ENCODE measurements at regions of chr4 and their contacts with region 1.

Region 1: DNA sequence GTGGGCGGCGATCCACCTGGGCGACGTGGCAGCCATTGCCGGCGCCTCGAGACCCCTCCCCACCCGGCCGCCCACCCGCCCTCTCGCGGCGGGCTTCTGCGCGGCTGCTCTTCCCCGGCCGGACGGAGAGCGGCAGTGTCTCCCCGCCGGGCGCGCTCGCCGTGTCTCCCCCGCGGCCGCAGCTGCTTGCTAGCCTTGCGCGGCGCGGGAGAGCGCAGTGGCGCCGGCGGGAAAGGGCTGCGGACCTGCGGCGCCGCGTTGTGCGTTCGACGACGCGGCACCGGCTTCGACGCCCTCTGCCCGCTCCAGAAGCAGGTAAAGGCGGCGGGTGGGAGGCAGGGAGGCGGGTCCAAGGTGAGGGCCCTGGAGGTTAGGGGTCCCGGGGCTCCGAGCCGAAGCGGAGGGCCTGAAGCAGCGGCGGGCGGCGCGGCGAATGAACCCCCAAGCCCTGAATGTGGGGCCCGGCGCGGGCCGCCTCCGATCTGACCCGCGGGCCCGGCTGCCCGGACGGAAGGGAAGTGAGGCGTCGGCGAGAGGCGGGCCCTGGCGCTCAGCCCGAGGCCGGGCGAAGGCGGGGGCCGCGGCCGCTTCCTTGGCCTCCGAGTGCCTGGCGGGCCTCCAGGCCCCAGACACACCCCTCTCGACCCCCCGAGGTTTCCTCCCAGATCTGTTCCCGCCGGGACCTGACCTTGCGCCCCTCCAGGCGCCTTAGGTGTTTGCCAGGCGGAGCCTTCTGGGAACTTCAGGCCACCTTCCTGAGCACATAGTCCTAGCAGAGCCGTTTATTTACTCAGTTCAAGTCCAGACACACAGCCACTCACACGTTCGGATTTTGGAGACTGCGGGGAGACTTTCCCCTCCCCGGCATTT is at the start of gene N4BP2:
- DNase-seq: peak; percentile 67
- H3K4me3 Mint-ChIP-seq: peak within 1 kb of the TSS; percentile 96
- H3K27ac Mint-ChIP-seq: peak within 1 kb of the TSS; percentile 100
- H3K4me1 Mint-ChIP-seq: peaks cover 40% of the 10 kb centered on the region
- H3K27me3 Mint-ChIP-seq: no peaks in the 10 kb centered on the region
- total RNA-seq, gene N4BP2: 28.7 and 29.0 TPM in 2 replicates

Region 2: DNA sequence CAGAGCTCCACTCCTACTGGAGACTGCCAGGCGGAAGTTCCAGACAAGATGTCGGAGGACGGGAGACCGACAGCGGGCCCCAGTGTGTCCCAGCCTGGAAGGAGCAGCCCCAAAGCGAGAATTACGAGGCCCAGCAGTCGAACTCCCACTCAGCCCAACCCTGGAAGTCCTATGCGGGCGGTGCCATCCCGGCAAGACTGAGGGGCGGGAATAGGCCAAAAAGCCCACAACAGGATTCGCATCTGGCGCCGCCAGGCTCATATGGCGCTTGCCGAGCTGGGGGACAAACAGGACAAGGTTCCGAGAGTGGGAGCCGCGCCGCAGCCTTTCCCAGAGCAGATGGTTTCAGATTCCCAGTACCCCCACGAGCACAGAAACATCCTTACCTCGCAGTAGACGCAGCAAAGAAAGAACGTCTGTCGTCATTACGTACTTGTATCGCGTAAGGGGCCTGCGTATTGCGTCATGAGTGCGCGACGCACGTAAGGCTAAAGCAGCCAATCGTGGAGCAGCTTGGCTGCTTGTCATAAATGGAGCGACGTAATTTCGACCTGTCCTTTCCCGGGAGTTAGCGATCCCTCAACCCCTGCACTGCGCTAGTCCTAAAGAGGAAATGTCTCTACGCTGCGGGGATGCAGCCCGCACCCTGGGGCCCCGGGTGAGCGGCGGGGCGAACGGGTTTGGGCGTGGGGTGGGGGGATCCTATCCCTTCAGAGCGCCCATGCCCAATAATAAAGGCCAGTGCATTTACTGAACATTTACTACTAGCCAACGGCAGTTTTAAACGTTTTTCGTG is 598.2 kb before region 1 on chr4 and contains the starts of genes LIAS and RPL9:
- intact Hi-C with region 1: loop called (anchors 2 kb)
- DNase-seq: peak; percentile 93
- H3K4me3 Mint-ChIP-seq: peak within 1 kb of the TSS; percentile 99
- H3K27ac Mint-ChIP-seq: peak within 1 kb of the TSS; percentile 99
- H3K4me1 Mint-ChIP-seq: peaks cover 49% of the 10 kb centered on the region
- H3K27me3 Mint-ChIP-seq: no peaks in the 10 kb centered on the region
- total RNA-seq, gene LIAS: 28.6 and 29.7 TPM in 2 replicates
- total RNA-seq, gene RPL9: 1,540 and 1,586 TPM in 2 replicates

Region 3: GRCh38 chr4:39933671-39934590 is 123.0 kb before region 1 on chr4:
- intact Hi-C with region 1: loop called (anchors 5 kb)
- DNase-seq: no peak
- H3K4me3 Mint-ChIP-seq: no peak overlapping the region
- H3K27ac Mint-ChIP-seq: no peak overlapping the region
- H3K4me1 Mint-ChIP-seq: peaks cover 60% of the 10 kb centered on the region
- H3K27me3 Mint-ChIP-seq: no peaks in the 10 kb centered on the region

Region 4: GRCh38 chr4:40121515-40121914 is 64.6 kb after region 1 on chr4:
- intact Hi-C with region 1: loop called (anchors 5 kb)
- DNase-seq: no peak
- H3K4me3 Mint-ChIP-seq: no peak overlapping the region
- H3K27ac Mint-ChIP-seq: peak overlapping the region; percentile 18
- H3K4me1 Mint-ChIP-seq: peaks cover 42% of the 10 kb centered on the region
- H3K27me3 Mint-ChIP-seq: no peaks in the 10 kb centered on the region

Region 5: DNA sequence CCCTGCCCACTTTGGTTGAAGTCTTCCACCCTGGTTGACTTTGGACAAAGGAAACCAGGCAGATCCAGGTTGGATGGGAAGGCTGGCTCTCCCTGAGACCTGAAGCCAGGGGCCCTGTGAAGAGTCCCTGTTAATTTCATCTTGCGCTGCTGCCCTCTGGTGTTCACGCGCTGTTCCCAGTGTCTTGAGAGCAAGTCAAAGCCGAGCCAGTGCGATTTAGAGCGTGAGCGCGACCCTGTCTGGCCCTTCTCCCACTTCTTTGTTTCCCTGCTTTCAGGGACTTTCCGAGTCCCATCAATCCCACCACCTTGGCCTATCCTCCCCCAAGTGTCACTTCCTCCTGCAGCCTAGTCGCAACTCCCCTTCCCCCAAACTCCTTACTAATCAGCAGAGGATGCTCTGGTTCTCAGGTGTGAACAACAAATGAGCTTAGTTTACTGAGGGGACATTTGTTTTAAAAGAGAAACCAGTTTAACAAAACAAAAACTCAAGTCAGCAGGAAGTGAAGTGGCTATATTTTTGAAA is 252.4 kb after region 1 on chr4:
- intact Hi-C with region 1: loop called (anchors 2 kb)
- DNase-seq: peak; percentile 81
- H3K4me3 Mint-ChIP-seq: peak overlapping the region; percentile 67
- H3K27ac Mint-ChIP-seq: peak overlapping the region; percentile 94
- H3K4me1 Mint-ChIP-seq: peaks cover 88% of the 10 kb centered on the region
- H3K27me3 Mint-ChIP-seq: no peaks in the 10 kb centered on the region

Region 6: DNA sequence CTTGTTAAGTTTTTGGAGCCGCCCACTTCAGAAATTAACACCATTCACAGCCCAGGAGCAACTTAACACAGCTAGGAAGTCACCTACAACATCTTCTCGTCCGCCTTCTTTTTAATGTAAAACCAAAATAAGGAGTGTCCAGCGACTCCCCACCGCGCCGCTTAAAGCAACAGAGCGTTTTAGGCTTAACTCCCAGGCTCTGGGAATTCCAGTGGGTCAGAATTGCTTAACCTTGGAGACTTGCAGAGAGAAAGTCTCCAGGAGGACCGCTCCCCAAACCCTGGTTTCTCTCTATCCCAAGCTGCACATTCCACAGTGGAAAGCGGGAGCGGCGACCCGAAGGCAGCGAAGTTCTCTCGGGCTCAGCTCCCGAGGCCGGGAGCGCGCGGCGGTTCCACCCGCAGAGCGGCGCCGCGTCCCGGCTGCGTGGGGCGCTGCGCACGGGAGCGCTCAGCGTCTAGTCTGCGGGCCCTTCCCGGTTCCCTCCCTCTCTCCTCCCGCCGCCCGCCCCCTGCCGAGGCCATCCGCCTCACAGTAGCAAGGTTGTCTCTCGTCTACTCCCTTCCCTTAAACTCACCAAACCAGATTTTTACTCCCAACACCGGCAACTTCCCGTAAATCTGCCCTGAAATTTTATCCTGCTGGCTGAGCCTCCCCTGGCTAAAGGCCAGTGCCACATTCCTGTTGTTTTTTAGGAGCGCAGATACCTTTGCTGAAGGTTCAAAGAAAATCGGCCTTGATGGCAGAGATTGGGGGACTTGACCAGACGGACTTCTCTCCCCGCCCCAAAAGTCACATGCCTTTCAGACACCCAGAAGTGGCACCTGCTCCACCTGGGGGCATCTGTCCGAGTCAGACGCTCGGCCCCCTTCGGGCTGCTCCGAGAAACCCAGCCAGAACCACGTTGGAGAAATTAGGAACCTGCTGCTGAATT is 572.7 kb after region 1 on chr4 and contains the start of gene RBM47:
- intact Hi-C with region 1: loop called (anchors 5 kb)
- DNase-seq: peak; percentile 12
- H3K4me3 Mint-ChIP-seq: peak within 1 kb of the TSS; percentile 92
- H3K27ac Mint-ChIP-seq: peak within 1 kb of the TSS; percentile 84
- H3K4me1 Mint-ChIP-seq: peaks cover 41% of the 10 kb centered on the region
- H3K27me3 Mint-ChIP-seq: peaks cover 2% of the 10 kb centered on the region
- total RNA-seq, gene RBM47: 20.3 and 21.4 TPM in 2 replicates

Region 7: DNA sequence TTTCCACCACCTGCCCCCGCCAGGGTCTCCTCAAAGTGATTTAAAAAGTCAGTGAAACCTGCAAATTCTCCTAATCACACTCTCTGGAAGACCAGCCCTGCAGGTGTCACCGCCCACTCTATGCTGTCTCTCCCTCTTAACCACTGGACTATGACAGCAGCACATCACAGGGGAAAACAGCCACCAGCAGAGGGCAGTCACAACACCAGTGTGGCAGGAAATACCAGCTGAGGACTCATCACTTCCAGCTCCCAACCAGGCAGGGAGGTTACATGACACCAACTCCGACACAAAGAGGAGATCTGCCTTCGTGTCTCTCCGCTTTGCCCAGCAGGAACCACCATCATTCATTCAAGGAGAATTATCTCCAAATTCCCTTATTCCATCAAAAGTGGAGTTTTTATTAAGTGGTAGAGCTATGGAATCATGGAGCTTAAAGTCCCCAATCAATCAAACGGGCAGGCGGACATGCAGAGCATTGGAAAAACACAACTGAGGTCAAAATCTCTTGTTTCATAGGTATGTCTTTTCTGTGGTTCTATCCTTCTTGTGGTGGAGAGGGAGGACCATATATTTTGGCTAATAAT is 784.1 kb after region 1 on chr4:
- intact Hi-C with region 1: loop called (anchors 5 kb)
- DNase-seq: peak; percentile 59
- H3K4me3 Mint-ChIP-seq: no peak overlapping the region
- H3K27ac Mint-ChIP-seq: no peak overlapping the region
- H3K4me1 Mint-ChIP-seq: peaks cover 8% of the 10 kb centered on the region
- H3K27me3 Mint-ChIP-seq: peaks cover 3% of the 10 kb centered on the region